ENCODE measurements at regions of chr5 and their contacts with region 1.

Region 1: DNA sequence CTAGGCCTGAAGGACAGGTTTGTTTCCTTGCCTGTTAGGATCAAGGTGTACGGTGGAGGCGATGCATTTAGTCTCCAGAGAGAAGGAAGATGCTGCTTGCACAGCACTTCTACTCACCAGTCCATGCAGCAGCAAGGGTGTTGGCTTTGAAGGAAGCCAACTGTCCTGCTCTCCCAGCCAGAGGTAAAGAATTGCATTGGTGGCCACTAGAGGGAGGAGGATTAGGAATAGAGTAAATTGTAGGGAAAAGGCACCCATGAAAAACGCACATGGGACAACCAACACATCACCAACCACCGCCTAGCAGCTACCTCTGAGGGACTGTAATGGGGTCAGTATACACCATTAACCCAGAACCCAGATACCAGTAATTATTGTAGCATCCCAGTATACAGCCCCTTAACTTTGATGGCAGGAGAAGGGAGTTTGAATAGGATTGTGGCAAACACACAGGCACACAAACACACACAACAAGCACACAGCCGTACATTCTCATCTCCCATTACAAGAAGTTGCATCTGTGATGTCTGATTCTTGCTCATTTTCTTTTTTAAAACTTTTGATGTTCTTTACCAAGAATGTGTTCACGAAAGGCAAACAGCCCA is 267.7 kb downstream of the ADAMTS6 start:
- DNase-seq: no peak
- ATAC-seq: no peak
- H3K4me3 ChIP-seq: no peak overlapping the region
- H3K27ac ChIP-seq: no peak overlapping the region
- H3K4me1 ChIP-seq: no peaks in the 10 kb centered on the region
- H3K27me3 ChIP-seq: no peaks in the 10 kb centered on the region
- CTCF ChIP-seq: peak in 2 of 3 experiments; percentile 39 to 40; a peak in 3 of 6 replicates
- EP300 ChIP-seq: no peak
- POLR2A ChIP-seq: no peak
- RAD21 ChIP-seq: no peak

Region 2: GRCh38 chr5:64834611-64835010 is 379.4 kb before region 1 on chr5:
- CTCF ChIA-PET with region 1: no interaction called
- POLR2A ChIA-PET with region 1: no interaction called
- RAD21 ChIA-PET with region 1: no interaction called
- SMC1A ChIA-PET with region 1: no interaction called
- in situ Hi-C with region 1: no loop called
- intact Hi-C with region 1: no loop called
- DNase-seq: no peak
- ATAC-seq: no peak
- H3K4me3 ChIP-seq: no peak overlapping the region
- H3K27ac ChIP-seq: no peak overlapping the region
- H3K4me1 ChIP-seq: no peaks in the 10 kb centered on the region
- H3K27me3 ChIP-seq: no peaks in the 10 kb centered on the region
- CTCF ChIP-seq: no peak
- EP300 ChIP-seq: no peak
- POLR2A ChIP-seq: no peak
- RAD21 ChIP-seq: no peak

Region 3: GRCh38 chr5:65163698-65164097 is 50.3 kb before region 1 on chr5:
- CTCF ChIA-PET with region 1: no interaction called
- POLR2A ChIA-PET with region 1: no interaction called
- RAD21 ChIA-PET with region 1: no interaction called
- SMC1A ChIA-PET with region 1: no interaction called
- in situ Hi-C with region 1: no loop called
- intact Hi-C with region 1: no loop called
- DNase-seq: no peak
- ATAC-seq: no peak
- H3K4me3 ChIP-seq: no peak overlapping the region
- H3K27ac ChIP-seq: no peak overlapping the region
- H3K4me1 ChIP-seq: no peaks in the 10 kb centered on the region
- H3K27me3 ChIP-seq: no peaks in the 10 kb centered on the region
- CTCF ChIP-seq: no peak
- EP300 ChIP-seq: no peak
- POLR2A ChIP-seq: no peak
- RAD21 ChIP-seq: no peak

Region 4: DNA sequence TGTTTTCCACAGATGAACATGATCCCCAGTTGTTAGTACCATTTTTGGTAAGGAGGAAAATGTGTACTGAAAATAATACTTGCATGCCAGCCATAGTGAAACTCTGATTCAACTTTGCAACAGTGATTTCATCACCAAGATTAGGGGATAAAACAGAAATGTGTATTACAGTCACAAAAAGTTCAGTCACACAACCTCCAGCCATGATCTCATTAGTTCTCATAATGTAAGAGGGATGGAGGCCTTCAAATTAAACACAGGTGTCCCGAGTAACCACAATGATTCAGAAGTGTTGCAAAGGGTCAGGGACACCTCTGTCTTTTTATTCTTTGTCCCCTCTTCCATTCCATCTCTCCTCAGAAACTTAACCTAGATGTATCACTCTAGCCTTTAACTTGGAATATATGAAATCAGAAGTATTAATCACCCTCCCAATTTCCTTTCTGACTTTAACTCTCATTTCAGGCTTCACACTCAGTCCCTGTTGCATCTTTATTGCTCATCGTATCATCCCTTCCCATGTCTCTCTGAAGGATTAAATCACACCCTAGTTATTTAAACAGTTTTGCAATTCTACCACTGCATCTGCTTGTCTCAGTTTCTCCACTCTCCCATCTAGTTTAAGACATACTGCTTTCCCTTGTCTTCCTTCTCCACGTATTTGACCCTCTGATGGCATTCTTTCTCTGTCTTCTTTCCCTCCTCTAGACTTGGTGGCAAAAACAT is 23.5 kb before region 1 on chr5:
- CTCF ChIA-PET with region 1: no interaction called
- POLR2A ChIA-PET with region 1: no interaction called
- RAD21 ChIA-PET with region 1: no interaction called
- SMC1A ChIA-PET with region 1: interaction called, 11 read pairs
- in situ Hi-C with region 1: no loop called
- intact Hi-C with region 1: no loop called
- DNase-seq: peak; percentile 17
- ATAC-seq: peak; percentile 92
- H3K4me3 ChIP-seq: no peak overlapping the region
- H3K27ac ChIP-seq: no peak overlapping the region
- H3K4me1 ChIP-seq: peaks cover 7% of the 10 kb centered on the region
- H3K27me3 ChIP-seq: no peaks in the 10 kb centered on the region
- CTCF ChIP-seq: no peak
- EP300 ChIP-seq: peak in 1 of 2 experiments; percentile 47; a peak in 1 of 4 replicates
- POLR2A ChIP-seq: no peak
- RAD21 ChIP-seq: no peak

Region 5: DNA sequence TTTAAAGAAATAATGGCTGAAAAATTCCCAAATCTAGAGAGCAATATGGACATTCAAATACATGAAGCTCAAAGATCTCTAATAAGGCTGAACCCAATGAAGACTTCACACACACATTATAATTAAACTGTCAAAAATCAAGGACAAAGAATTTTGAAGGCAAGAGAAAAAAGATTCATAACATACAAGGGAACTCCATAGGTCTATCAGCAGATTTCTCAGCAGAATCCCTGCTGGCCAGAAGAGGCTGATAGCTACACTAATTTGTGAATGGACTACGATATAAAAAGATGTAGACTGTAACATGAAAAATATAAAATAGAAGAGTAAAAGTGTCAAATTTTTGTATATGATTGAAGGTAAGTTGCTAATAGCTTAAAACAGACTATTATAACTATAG is 15.8 kb after region 1 on chr5:
- CTCF ChIA-PET with region 1: interaction called, 3 read pairs
- POLR2A ChIA-PET with region 1: interaction called, 4 read pairs
- RAD21 ChIA-PET with region 1: no interaction called
- SMC1A ChIA-PET with region 1: interaction called, 13 read pairs
- in situ Hi-C with region 1: no loop called
- intact Hi-C with region 1: no loop called
- DNase-seq: no peak
- ATAC-seq: no peak
- H3K4me3 ChIP-seq: no peak overlapping the region
- H3K27ac ChIP-seq: no peak overlapping the region
- H3K4me1 ChIP-seq: no peaks in the 10 kb centered on the region
- H3K27me3 ChIP-seq: no peaks in the 10 kb centered on the region
- CTCF ChIP-seq: no peak
- EP300 ChIP-seq: no peak
- POLR2A ChIP-seq: no peak
- RAD21 ChIP-seq: no peak

Measured in GM12878 (cell line).